ENCODE measurements at regions of chr5 and their contacts with region 1.

Region 1: GRCh38 chr5:126449751-126450271 is 26.6 kb downstream of the GRAMD2B start:
- DNase-seq: peak; percentile 2 to 86 (median 53)
- ATAC-seq: peak; percentile 84
- H3K4me3 ChIP-seq: peak overlapping the region; percentile 42 to 56
- H3K4me3 Mint-ChIP-seq: peak overlapping the region; percentile 87
- H3K27ac ChIP-seq: peak overlapping the region; percentile 85 to 89
- H3K27ac Mint-ChIP-seq: peak overlapping the region; percentile 99
- H3K4me1 ChIP-seq: peaks cover 47% of the 10 kb centered on the region
- H3K4me1 Mint-ChIP-seq: peaks cover 68% of the 10 kb centered on the region
- H3K27me3 ChIP-seq: no peaks in the 10 kb centered on the region
- H3K27me3 Mint-ChIP-seq: no peaks in the 10 kb centered on the region
- CTCF ChIP-seq: no peak

Region 2: GRCh38 chr5:126430631-126431030 is 19.2 kb before region 1 on chr5:
- CTCF ChIA-PET with region 1: interaction called, 3 read pairs
- POLR2A ChIA-PET with region 1: no interaction called
- intact Hi-C with region 1: loop called (anchors 2 kb)
- DNase-seq: no peak
- ATAC-seq: no peak
- H3K4me3 ChIP-seq: no peak overlapping the region
- H3K4me3 Mint-ChIP-seq: no peak overlapping the region
- H3K27ac ChIP-seq: no peak overlapping the region
- H3K27ac Mint-ChIP-seq: no peak overlapping the region
- H3K4me1 ChIP-seq: no peaks in the 10 kb centered on the region
- H3K4me1 Mint-ChIP-seq: peaks cover 29% of the 10 kb centered on the region
- H3K27me3 ChIP-seq: no peaks in the 10 kb centered on the region
- H3K27me3 Mint-ChIP-seq: no peaks in the 10 kb centered on the region
- CTCF ChIP-seq: no peak

Region 3: DNA sequence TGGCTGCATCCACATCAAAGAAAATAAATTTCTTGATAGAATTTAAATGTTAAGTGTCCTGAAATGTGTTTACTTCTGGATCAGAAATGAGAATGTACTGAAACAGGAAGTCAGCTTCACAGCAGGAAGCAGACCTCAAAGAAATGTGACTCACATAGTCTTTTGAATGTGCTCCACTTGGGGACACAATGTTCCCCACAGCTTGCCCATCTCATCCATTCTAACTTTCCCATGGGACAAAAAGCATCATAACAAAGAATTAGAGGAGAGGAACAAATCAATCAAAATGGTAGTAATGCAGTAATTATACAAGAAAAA is 59.1 kb after region 1 on chr5:
- CTCF ChIA-PET with region 1: no interaction called
- POLR2A ChIA-PET with region 1: no interaction called
- intact Hi-C with region 1: loop called in 1 of 2 experiments (anchors 2 kb)
- DNase-seq: peak in 2 of 9 experiments; percentile 38 to 58
- ATAC-seq: peak; percentile 81
- H3K4me3 ChIP-seq: peak overlapping the region; percentile 29 to 36
- H3K4me3 Mint-ChIP-seq: peak overlapping the region; percentile 79
- H3K27ac ChIP-seq: peak overlapping the region; percentile 23 to 51
- H3K27ac Mint-ChIP-seq: peak overlapping the region; percentile 85
- H3K4me1 ChIP-seq: peaks cover 35% of the 10 kb centered on the region
- H3K4me1 Mint-ChIP-seq: peaks cover 52% of the 10 kb centered on the region
- H3K27me3 ChIP-seq: no peaks in the 10 kb centered on the region
- H3K27me3 Mint-ChIP-seq: no peaks in the 10 kb centered on the region
- CTCF ChIP-seq: no peak

Measured in CD8-positive, alpha-beta T cell (primary cell).